Activated B cell treated with CpG ODN at 0.5 μM for 24 hours (primary cell): ENCODE measurements at regions of chr1 and their contacts with region 1.

Region 1: GRCh38 chr1:6889875-6890480 is 104.7 kb downstream of the CAMTA1 start:
- DNase-seq: no peak
- ATAC-seq: peak; percentile 47
- H3K4me3 Mint-ChIP-seq: no peak overlapping the region
- H3K27ac Mint-ChIP-seq: no peak overlapping the region
- H3K4me1 Mint-ChIP-seq: no peaks in the 10 kb centered on the region
- H3K27me3 Mint-ChIP-seq: no peaks in the 10 kb centered on the region
- CTCF ChIP-seq: peak; percentile 31

Region 2: DNA sequence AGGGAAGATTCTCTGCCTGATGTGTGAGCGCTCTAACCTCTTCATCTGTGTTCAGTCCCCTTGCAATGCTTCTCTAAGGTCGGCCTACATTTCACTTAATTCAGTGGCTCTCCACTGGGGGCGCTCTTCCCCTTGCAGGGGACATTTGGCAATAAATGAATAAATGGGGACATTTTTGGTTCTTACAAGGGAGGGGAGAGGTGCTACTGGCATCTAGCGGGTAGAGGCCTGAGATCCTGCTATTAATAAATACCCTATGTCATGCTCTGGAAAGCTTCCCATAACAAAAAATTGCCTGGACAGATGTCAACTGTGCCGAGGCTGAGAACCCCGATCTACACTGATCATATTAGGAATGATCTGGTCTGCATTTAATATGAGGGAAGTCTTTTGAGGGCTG is 162.4 kb before region 1 on chr1:
- CTCF ChIA-PET with region 1: interaction called, 24 read pairs
- POLR2A ChIA-PET with region 1: no interaction called
- intact Hi-C with region 1: loop called (anchors 1 kb)
- DNase-seq: peak; percentile 44
- ATAC-seq: peak; percentile 47
- H3K4me3 Mint-ChIP-seq: no peak overlapping the region
- H3K27ac Mint-ChIP-seq: no peak overlapping the region
- H3K4me1 Mint-ChIP-seq: no peaks in the 10 kb centered on the region
- H3K27me3 Mint-ChIP-seq: peaks cover 3% of the 10 kb centered on the region
- CTCF ChIP-seq: peak; percentile 64

Region 3: GRCh38 chr1:6794164-6794563 is 95.8 kb before region 1 on chr1:
- CTCF ChIA-PET with region 1: interaction called, 4 read pairs
- POLR2A ChIA-PET with region 1: no interaction called
- intact Hi-C with region 1: loop called (anchors 1 kb)
- DNase-seq: no peak
- ATAC-seq: no peak
- H3K4me3 Mint-ChIP-seq: no peak overlapping the region
- H3K27ac Mint-ChIP-seq: no peak overlapping the region
- H3K4me1 Mint-ChIP-seq: peaks cover 27% of the 10 kb centered on the region
- H3K27me3 Mint-ChIP-seq: no peaks in the 10 kb centered on the region
- CTCF ChIP-seq: no peak